Activated CD4-positive, alpha-beta T cell treated with anti-CD3 and anti-CD28 coated beads, Interleukin-2, amount 10 ng/mL, durations not matched to agents 24 days and 14 days (primary cell): ENCODE measurements at regions of chrX and their contacts with region 1.

Region 1: GRCh38 chrX:120629667-120630537 is at the start of gene C1GALT1C1:
- DNase-seq: peak; percentile 97
- H3K4me3 Mint-ChIP-seq: peak within 1 kb of the TSS; percentile 94
- H3K27ac Mint-ChIP-seq: peak within 1 kb of the TSS; percentile 97
- H3K4me1 Mint-ChIP-seq: peaks cover 15% of the 10 kb centered on the region
- H3K27me3 Mint-ChIP-seq: no peaks in the 10 kb centered on the region
- total RNA-seq, gene C1GALT1C1: 21.1 and 21.7 TPM in 2 replicates

Region 2: DNA sequence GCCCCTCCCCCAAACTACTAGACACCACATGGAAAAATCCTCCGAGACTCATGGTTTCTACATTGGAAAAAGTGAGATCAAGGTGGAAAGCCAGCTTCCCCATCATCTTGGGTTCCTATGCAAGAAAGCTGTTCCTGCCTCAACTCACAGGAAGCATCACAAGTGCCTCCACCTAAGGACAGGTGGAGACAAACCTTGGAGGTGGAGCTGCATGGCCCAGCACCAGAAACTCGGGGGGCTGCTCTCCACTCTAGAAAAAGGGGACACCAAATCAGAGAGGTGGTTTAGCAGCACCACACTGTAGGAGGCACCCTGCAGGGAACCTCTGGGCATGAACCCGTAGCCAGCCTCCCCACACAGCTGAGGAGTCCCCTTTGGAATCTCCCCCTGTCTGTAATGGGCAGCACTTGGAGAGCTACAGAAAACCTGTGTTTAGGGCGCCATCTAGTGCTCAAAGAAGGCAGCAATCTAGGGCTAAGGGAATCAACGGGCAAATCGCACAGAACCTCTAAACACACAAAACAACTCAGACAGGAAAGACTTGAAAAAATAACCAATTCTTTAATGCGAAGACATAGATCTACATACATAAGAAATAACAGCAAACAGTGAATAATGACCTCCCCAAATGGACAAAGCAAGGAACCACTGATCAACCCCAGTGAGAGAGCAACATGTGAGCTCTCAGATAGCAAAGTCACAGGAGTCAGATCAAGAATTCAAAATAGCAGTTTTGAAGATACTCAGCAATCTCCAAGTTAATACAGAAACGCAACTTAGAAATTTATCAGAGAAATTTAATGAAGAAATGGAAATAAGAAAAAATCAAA is 416.3 kb before region 1 on chrX:
- intact Hi-C with region 1: no loop called
- DNase-seq: peak; percentile 84
- H3K4me3 Mint-ChIP-seq: no peak overlapping the region
- H3K27ac Mint-ChIP-seq: no peak overlapping the region
- H3K4me1 Mint-ChIP-seq: peaks cover 5% of the 10 kb centered on the region
- H3K27me3 Mint-ChIP-seq: peaks cover 8% of the 10 kb centered on the region

Region 3: GRCh38 chrX:120522820-120523219 is 107.1 kb before region 1 on chrX:
- intact Hi-C with region 1: no loop called
- DNase-seq: no peak
- H3K4me3 Mint-ChIP-seq: no peak overlapping the region
- H3K27ac Mint-ChIP-seq: no peak overlapping the region
- H3K4me1 Mint-ChIP-seq: no peaks in the 10 kb centered on the region
- H3K27me3 Mint-ChIP-seq: no peaks in the 10 kb centered on the region

Region 4: GRCh38 chrX:120603707-120604360 is 26.1 kb before region 1 on chrX and contains the start of gene MCTS1:
- intact Hi-C with region 1: loop called (anchors 1 kb)
- DNase-seq: peak; percentile 94
- H3K4me3 Mint-ChIP-seq: peak within 1 kb of the TSS; percentile 97
- H3K27ac Mint-ChIP-seq: peak within 1 kb of the TSS; percentile 96
- H3K4me1 Mint-ChIP-seq: peaks cover 2% of the 10 kb centered on the region
- H3K27me3 Mint-ChIP-seq: peaks cover 1% of the 10 kb centered on the region
- total RNA-seq, gene MCTS1: 78.5 and 79.0 TPM in 2 replicates